BJ (cell line): ENCODE measurements at regions of chr11 and their contacts with region 1.

Region 1: GRCh38 chr11:72446902-72447769 is 12.8 kb upstream of the CLPB start:
- DNase-seq: no peak
- H3K4me3 ChIP-seq: no peak overlapping the region
- H3K27me3 ChIP-seq: peaks cover 7% of the 10 kb centered on the region; the same call in 1 of the 2 replicates
- CTCF ChIP-seq: peak; percentile 82

Region 2: GRCh38 chr11:72123117-72123653 is 324.0 kb before region 1 on chr11:
- CTCF ChIA-PET with region 1: no interaction called
- POLR2A ChIA-PET with region 1: no interaction called
- DNase-seq: no peak
- H3K4me3 ChIP-seq: no peak overlapping the region
- H3K27me3 ChIP-seq: no peaks in the 10 kb centered on the region
- CTCF ChIP-seq: no peak

Region 3: DNA sequence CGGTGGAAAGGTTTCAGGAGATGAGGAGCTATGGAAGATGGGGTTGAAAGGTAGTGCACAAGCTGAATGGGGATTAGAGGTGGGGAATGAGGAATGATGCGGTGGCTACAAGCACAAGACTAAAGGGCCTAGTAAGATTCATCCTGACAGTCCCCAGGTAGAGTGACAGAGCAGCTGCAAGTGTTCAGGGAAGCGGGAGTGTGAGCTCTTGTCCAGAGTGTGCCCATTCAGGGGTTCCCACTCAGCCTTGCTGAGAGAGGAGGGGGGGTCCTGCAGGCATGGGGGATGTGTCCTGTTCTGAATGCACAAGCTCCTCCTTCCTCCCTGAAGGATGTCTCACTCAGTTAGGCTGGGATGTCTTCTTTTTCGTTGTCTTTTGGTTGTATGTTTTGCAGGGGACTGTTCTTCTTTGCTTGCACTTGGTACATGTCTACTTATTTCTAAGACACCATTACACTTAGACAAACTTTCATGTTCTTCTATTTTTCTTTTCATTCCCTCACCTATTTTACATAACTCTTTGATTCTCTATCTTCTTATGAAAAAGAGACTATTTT is 13.0 kb after region 1 on chr11:
- CTCF ChIA-PET with region 1: interaction called, 15 read pairs
- POLR2A ChIA-PET with region 1: no interaction called
- DNase-seq: no peak
- H3K4me3 ChIP-seq: no peak overlapping the region
- H3K27me3 ChIP-seq: peaks cover 21% of the 10 kb centered on the region
- CTCF ChIP-seq: no peak

Region 4: GRCh38 chr11:72652873-72653630 is 205.9 kb after region 1 on chr11:
- CTCF ChIA-PET with region 1: no interaction called
- POLR2A ChIA-PET with region 1: no interaction called
- DNase-seq: no peak
- H3K4me3 ChIP-seq: no peak overlapping the region
- H3K27me3 ChIP-seq: peaks cover 17% of the 10 kb centered on the region
- CTCF ChIP-seq: no peak